ENCODE measurements at regions of chr1 and their contacts with region 1.

Region 1: GRCh38 chr1:235504496-235505222 is 407 bp upstream of the B3GALNT2 start:
- DNase-seq: peak; percentile 98 to 99
- ATAC-seq: peak; percentile 77 to 80
- H3K4me3 ChIP-seq: peak overlapping the region; percentile 74 to 92 (median 86)
- H3K27ac ChIP-seq: peak overlapping the region; percentile 99 to 100 (median 99)
- H3K4me1 ChIP-seq: peaks cover 35 to 38% of the 10 kb centered on the region in 2 donors
- H3K27me3 ChIP-seq: no peaks in the 10 kb centered on the region
- CTCF ChIP-seq: peak; percentile 89 to 94 (median 90)
- POLR2A ChIP-seq: peak; percentile 83

Region 2: DNA sequence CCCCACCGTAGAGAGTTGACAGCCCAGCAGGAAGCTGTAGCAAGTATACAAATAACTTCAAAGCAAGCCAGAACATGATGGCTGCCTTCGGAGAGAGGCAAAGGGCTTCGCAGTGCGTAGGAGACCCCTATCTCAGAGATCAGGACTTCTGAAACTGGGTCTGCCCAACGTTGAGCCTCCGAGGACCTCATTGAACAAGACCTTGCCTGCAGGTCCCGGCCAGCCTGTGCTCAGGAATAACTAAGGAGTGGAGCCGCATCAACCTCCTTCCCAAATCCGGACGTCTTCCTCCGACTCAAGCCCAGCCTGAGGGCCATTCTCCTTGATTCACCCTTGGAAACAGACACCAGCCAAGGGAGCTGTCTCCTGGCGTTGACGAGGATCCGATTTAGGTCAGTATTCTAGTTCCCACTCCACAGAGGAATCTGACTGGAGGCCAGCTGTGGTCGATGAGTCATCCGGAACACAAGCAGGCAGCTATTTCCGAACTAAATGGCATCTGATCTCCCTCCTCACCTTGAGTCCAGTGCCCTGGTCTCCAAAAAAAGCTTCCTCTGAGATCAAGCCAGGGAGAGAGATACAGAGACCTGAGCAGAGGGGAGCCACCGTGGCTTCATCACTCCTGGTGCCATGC is 1297.9 kb before region 1 on chr1:
- in situ Hi-C with region 1: no loop called
- intact Hi-C with region 1: loop called (anchors 10 kb)
- DNase-seq: peak; percentile 90 to 95
- ATAC-seq: peak; percentile 100
- H3K4me3 ChIP-seq: no peak overlapping the region
- H3K27ac ChIP-seq: peak overlapping the region; percentile 55 to 65 (median 60)
- H3K4me1 ChIP-seq: peaks cover 17 to 20% of the 10 kb centered on the region in 2 donors
- H3K27me3 ChIP-seq: no peaks in the 10 kb centered on the region
- CTCF ChIP-seq: no peak
- POLR2A ChIP-seq: no peak

Region 3: GRCh38 chr1:235253219-235253962 is 251.3 kb before region 1 on chr1:
- in situ Hi-C with region 1: no loop called
- intact Hi-C with region 1: loop called (anchors 10 kb)
- DNase-seq: peak; percentile 28 to 66
- ATAC-seq: peak; percentile 95 to 99
- H3K4me3 ChIP-seq: no peak overlapping the region
- H3K27ac ChIP-seq: no peak overlapping the region
- H3K4me1 ChIP-seq: peaks cover 0 to 12% of the 10 kb centered on the region in 2 donors
- H3K27me3 ChIP-seq: no peaks in the 10 kb centered on the region
- CTCF ChIP-seq: peak; percentile 47 to 88 (median 81)
- POLR2A ChIP-seq: no peak

Region 4: GRCh38 chr1:235367000-235367908 is 137.4 kb before region 1 on chr1 and contains the start of gene TBCE:
- in situ Hi-C with region 1: no loop called
- intact Hi-C with region 1: loop called (anchors 5 kb)
- DNase-seq: peak; percentile 96 to 98
- ATAC-seq: peak; percentile 99 to 100
- H3K4me3 ChIP-seq: peak within 1 kb of the TSS; percentile 63 to 83 (median 76)
- H3K27ac ChIP-seq: peak within 1 kb of the TSS; percentile 85 to 93 (median 88)
- H3K4me1 ChIP-seq: peaks cover 2 to 4% of the 10 kb centered on the region in 2 donors
- H3K27me3 ChIP-seq: no peaks in the 10 kb centered on the region
- CTCF ChIP-seq: peak in 2 of 5 experiments; percentile 17 to 19
- POLR2A ChIP-seq: peak; percentile 86 to 94
- total RNA-seq, gene TBCE: 24.4 to 47.6 (median 29.2) TPM

Region 5: GRCh38 chr1:235971571-235972310 is 467.1 kb after region 1 on chr1:
- in situ Hi-C with region 1: loop called in 1 of 4 experiments (anchors 25 kb)
- intact Hi-C with region 1: no loop called
- DNase-seq: peak; percentile 80 to 88
- ATAC-seq: peak; percentile 90 to 93
- H3K4me3 ChIP-seq: peak overlapping the region; percentile 35 to 57 (median 44)
- H3K27ac ChIP-seq: peak overlapping the region; percentile 76 to 81 (median 78)
- H3K4me1 ChIP-seq: peaks cover 5 to 6% of the 10 kb centered on the region in 2 donors
- H3K27me3 ChIP-seq: no peaks in the 10 kb centered on the region
- CTCF ChIP-seq: peak; percentile 54 to 76 (median 71)
- POLR2A ChIP-seq: peak in 1 of 2 donors; percentile 68

Region 6: GRCh38 chr1:236523701-236524141 is 1019.1 kb after region 1 on chr1 and contains the start of gene LGALS8:
- in situ Hi-C with region 1: no loop called
- intact Hi-C with region 1: loop called (anchors 10 kb)
- DNase-seq: peak; percentile 63 to 67
- ATAC-seq: peak; percentile 76 to 80
- H3K4me3 ChIP-seq: peak within 1 kb of the TSS; percentile 84 to 98 (median 96)
- H3K27ac ChIP-seq: peak within 1 kb of the TSS; percentile 77 to 81 (median 80)
- H3K4me1 ChIP-seq: peaks cover 5 to 9% of the 10 kb centered on the region in 2 donors
- H3K27me3 ChIP-seq: no peaks in the 10 kb centered on the region
- CTCF ChIP-seq: no peak
- POLR2A ChIP-seq: peak; percentile 30
- total RNA-seq, gene LGALS8: 11.1 to 20.7 (median 12.5) TPM